K562 (cell line): ENCODE measurements at regions of chr7 and their contacts with region 1.

Region 1: DNA sequence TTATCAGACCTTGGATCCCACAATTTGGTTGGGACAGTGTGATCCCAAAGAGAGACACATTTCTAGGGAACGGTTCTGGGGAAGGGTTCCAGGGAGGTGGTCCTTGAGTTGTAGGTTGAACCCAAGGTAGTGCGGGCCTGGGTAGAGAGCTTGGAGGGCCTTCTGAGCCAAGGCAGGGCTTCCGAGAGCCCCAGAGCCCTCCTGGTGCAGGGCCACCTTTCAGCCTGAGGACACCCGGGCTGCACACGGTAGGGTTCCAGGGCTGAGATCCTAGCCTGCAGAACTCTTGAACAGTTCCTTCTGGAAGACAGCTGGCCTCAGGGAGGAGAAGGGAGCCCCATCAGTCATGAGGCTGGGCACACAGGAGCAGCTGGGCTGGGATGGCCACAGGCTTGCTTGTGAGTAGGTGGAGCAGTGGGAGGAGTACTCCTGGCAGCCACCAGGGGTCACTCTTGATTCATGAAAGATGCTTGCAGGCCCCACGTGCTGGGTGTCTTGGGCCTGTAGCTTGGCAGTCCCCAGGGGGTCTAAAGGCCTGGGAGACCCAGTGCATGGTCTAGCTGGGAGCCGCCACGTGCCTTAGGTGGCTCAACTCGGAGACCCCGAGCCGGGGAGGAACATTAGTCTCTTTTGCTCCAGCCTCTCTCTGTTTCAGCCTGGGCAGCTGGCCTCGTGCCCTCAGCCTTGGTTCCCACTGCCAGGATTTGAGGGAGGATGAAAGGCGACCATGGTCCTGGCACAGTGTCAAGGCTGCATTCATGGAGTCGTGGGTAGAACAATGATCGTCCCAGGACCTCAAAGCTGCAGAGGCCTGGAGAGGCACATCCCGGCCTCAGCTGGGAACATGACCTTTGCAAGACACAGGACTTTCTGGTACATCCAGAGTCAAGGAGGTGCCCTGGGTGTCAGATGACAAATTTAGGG is 381.6 kb downstream of the TYW1 start:
- DNase-seq: peak; percentile 78 to 88 (median 83)
- ATAC-seq: peak; percentile 100
- H3K4me3 ChIP-seq: no peak overlapping the region
- H3K27ac ChIP-seq: no peak overlapping the region
- H3K4me1 ChIP-seq: no peaks in the 10 kb centered on the region; a peak in 1 of 5 replicates
- H3K27me3 ChIP-seq: no peaks in the 10 kb centered on the region; a peak in 1 of 5 replicates
- CTCF ChIP-seq: peak; percentile 82 to 94 (median 92)
- EP300 ChIP-seq: no peak
- POLR2A ChIP-seq: no peak
- RAD21 ChIP-seq: peak; percentile 80 to 90

Region 2: DNA sequence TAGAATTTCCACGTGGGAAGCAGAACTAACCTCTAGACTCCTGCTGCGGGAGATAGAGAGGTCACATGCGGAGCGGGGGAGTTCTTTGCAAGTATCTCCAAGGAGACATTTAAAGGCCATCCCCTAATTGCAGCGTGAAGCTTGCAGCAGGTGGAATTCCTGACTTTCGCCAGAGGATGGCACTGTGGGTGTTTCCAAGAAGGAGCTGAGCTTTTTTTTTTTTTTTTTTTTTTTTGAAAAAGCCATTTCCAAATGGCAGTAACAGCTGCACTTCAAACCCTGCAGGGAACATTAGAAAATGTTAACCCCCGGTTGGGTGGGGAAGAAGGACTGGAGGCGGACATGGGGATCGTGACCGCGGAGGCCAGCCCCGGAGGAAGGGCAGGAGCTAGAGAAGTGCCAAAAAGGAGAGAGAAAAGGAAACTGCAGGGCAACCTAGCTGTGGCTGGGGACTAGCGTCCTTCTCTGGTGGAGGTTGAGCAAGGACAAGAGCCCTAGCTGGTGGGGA is 106.1 kb after region 1 on chr7:
- CTCF ChIA-PET with region 1: no interaction called
- POLR2A ChIA-PET with region 1: no interaction called
- in situ Hi-C with region 1: no loop called
- intact Hi-C with region 1: loop called (anchors 5 kb)
- DNase-seq: peak; percentile 71 to 80 (median 74)
- ATAC-seq: peak; percentile 90
- H3K4me3 ChIP-seq: no peak overlapping the region
- H3K27ac ChIP-seq: no peak overlapping the region
- H3K4me1 ChIP-seq: no peaks in the 10 kb centered on the region; a peak in 1 of 5 replicates
- H3K27me3 ChIP-seq: peaks cover 0 to 11% of the 10 kb centered on the region in 2 experiments; a peak in 4 of 5 replicates
- CTCF ChIP-seq: peak; percentile 70 to 86 (median 85)
- EP300 ChIP-seq: no peak
- POLR2A ChIP-seq: no peak
- RAD21 ChIP-seq: peak; percentile 43 to 60

Region 3: DNA sequence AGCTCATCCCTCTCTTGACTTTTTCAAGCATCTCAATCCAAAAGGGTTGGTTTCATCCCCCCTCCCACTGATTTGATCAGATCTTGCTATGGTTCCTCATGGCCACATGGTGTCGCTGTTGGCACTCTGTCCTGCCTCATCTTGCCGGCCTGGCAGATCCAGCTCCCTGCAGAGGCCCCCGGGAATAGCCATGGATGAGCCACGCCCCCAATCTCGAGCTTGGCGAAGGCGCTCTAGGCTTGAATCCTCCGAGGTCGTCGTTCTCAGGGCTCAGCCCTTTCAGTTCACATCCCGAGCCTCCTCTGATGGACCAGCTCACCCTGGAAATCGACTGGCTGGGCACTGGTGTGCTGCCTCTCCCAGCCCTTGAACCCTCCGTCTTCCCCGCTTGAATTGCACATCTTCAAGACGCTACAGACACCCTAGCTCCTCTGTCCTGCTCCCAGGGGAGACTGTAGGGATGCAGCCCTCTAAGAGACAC is 247.1 kb after region 1 on chr7:
- CTCF ChIA-PET with region 1: no interaction called
- POLR2A ChIA-PET with region 1: no interaction called
- in situ Hi-C with region 1: no loop called
- intact Hi-C with region 1: loop called (anchors 5 kb)
- DNase-seq: peak; percentile 73 to 92 (median 84)
- ATAC-seq: peak; percentile 97
- H3K4me3 ChIP-seq: no peak overlapping the region
- H3K27ac ChIP-seq: no peak overlapping the region
- H3K4me1 ChIP-seq: no peaks in the 10 kb centered on the region
- H3K27me3 ChIP-seq: peaks cover 5 to 10% of the 10 kb centered on the region in 2 experiments; a peak in 3 of 5 replicates
- CTCF ChIP-seq: peak; percentile 76 to 93 (median 85)
- EP300 ChIP-seq: no peak
- POLR2A ChIP-seq: no peak
- RAD21 ChIP-seq: peak; percentile 52 to 75; a peak in 3 of 4 replicates